Cardiac septum (tissue), 1 donor: ENCODE measurements at regions of chr10 and their contacts with region 1.

Region 1: DNA sequence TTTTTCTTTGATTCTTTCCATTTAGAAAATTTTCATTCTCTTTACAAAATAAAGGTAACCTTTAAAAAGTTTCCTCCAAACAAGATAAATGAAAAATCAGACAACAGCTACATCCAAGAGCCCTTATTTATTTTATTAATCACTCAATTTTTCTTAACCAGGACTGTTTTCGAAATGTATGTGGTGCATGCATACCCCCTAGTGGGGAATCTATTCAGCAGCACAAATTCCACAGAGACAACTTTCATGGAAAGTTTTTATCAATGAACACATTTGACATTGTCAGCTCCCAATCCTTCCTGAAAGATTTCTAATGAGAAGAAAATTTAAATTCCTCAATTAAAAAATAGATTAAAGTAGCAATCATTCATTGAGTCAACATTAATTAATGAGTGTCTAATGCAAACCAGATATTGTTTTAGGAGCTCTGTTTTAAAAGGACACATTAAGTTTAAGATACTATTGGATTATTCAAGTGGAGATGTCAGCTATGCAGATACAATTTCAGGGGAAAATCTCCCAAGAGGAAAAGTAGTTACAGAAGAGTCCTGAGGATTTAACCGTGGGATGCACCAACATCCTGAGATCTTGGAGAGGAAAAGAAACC is 5.2 kb upstream of the HTR7 start:
- DNase-seq: no peak

Region 2: GRCh38 chr10:90751107-90751997 is 111.7 kb before region 1 on chr10:
- intact Hi-C with region 1: loop called (anchors 5 kb)
- DNase-seq: no peak

Region 3: DNA sequence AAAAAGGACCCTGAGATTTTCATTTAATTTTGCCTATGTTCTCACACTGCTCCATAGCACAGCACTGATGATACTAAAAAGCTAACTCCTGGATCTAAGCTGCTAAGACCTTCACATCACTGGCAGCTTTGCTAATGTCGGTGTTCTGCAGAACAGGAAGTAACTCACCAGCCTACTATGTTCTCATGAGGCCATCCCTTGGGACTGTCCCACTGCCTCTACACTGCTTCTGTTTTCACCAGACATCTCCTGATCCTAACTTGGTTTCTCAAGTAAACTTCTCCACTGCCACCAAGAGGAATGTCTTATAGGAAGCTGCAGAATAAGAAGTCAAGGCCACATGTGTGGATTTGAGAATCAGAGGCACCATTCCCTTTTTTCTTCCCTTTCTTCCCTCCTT is 20.3 kb before region 1 on chr10:
- intact Hi-C with region 1: no loop called
- DNase-seq: no peak